Ascending aorta (tissue), 2 donors: ENCODE measurements at regions of chr3 and their contacts with region 1.

Region 1: DNA sequence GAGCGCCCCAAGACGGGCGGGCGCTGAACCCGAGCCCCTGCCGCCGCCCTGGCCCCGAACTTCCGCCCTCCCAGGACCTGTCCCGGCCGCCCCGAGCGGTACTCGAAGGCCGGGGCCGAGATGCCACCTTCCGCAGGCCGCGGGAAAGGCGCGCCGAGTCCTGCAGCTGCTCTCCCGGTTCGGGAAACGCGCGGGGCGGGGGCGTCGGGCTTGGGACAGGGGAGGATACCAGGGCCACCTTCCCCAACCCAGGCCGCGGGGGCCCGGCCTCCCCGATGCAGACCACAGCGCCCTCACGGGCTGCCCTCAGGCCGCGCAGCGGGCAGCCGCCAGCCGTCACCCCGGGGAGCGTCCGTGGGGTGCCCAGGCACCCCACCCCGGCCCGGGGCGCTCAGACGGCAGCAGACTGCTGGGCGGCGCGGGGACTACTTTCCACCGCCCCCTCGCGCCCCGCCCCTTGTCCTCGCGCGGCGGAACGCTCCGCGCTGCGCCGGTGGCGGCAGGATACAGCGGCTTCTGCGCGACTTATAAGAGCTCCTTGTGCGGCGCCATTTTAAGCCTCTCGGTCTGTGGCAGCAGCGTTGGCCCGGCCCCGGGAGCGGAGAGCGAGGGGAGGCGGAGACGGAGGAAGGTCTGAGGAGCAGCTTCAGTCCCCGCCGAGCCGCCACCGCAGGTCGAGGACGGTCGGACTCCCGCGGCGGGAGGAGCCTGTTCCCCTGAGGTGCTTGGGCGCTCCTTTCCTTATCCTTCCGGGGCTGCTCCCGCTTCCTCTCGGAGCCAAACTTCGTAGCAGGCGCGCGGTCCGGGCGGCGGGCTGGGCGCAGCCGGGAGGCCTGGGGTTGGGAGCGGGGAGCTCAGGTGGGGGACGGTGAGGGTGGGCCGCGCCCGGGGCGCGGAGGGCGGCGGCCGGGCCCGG is at the start of gene CTNNB1:
- DNase-seq: peak; percentile 74 to 96
- H3K4me3 ChIP-seq: peak within 1 kb of the TSS; percentile 100
- H3K27ac ChIP-seq: peak within 1 kb of the TSS; percentile 98 to 100
- H3K4me1 ChIP-seq: peaks cover 0 to 29% of the 10 kb centered on the region in 2 donors
- H3K27me3 ChIP-seq: no peaks in the 10 kb centered on the region
- CTCF ChIP-seq: no peak
- total RNA-seq, gene CTNNB1: 371 TPM

Region 2: GRCh38 chr3:40584625-40585189 is 614.5 kb before region 1 on chr3:
- intact Hi-C with region 1: loop called (anchors 2 kb)
- DNase-seq: peak; percentile 36 to 91
- H3K4me3 ChIP-seq: no peak overlapping the region
- H3K27ac ChIP-seq: no peak overlapping the region
- H3K4me1 ChIP-seq: peaks cover 0 to 8% of the 10 kb centered on the region in 2 donors
- H3K27me3 ChIP-seq: no peaks in the 10 kb centered on the region
- CTCF ChIP-seq: peak; percentile 81 to 97 (median 92)

Region 3: GRCh38 chr3:40780291-40780924 is 418.8 kb before region 1 on chr3:
- intact Hi-C with region 1: loop called (anchors 5 kb)
- DNase-seq: peak in 1 of 2 donors; percentile 88
- H3K4me3 ChIP-seq: peak overlapping the region; percentile 16 to 57
- H3K27ac ChIP-seq: peak overlapping the region; percentile 83 to 84
- H3K4me1 ChIP-seq: peaks cover 11 to 17% of the 10 kb centered on the region in 2 donors
- H3K27me3 ChIP-seq: no peaks in the 10 kb centered on the region
- CTCF ChIP-seq: no peak

Region 4: GRCh38 chr3:41224120-41224806 is 25.1 kb after region 1 on chr3:
- intact Hi-C with region 1: loop called (anchors 2 kb)
- DNase-seq: peak in 1 of 2 donors; percentile 78
- H3K4me3 ChIP-seq: no peak overlapping the region
- H3K27ac ChIP-seq: peak overlapping the region; percentile 50 to 80
- H3K4me1 ChIP-seq: peaks cover 0 to 53% of the 10 kb centered on the region in 2 donors
- H3K27me3 ChIP-seq: no peaks in the 10 kb centered on the region
- CTCF ChIP-seq: peak in 1 of 3 experiments; percentile 13